CD4-positive, alpha-beta memory T cell (primary cell): ENCODE measurements at regions of chr11 and their contacts with region 1.

Region 1: DNA sequence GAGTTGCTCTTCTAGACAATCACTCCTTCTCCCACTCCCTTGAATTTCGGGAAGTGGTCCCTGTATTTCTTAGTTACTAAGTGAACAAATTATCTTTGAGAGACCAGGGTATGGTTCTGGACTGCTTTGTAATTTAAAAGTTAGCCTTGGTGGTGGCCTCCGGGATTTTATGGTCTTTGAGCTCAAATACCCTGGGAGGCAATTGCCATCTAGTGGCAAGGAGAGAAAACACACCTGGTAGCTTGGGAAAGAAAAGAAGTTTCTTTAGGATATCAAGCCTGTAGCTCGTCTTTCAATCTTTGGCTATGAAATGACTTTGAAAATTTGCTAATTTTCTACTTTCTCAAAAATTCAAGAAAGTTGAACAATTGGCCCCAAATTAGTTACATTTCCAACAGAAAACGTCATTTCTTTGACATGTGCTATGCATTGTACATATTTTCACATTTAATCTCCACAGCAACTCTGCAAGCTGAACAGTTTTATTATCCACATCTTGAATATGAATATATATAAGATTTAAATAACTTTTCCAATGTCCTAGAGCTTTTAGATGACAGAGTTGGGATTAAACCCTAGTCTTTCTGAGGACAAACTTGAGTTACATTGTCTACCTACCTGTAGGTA is 39.1 kb downstream of the MMP27 start:
- DNase-seq: peak in 4 of 5 donors; percentile 30 to 37 (median 33)
- H3K4me3 ChIP-seq: no peak overlapping the region
- H3K4me3 Mint-ChIP-seq: no peak overlapping the region
- H3K27ac ChIP-seq: no peak overlapping the region
- H3K27ac Mint-ChIP-seq: no peak overlapping the region
- H3K4me1 ChIP-seq: no peaks in the 10 kb centered on the region
- H3K4me1 Mint-ChIP-seq: no peaks in the 10 kb centered on the region
- H3K27me3 ChIP-seq: no peaks in the 10 kb centered on the region
- H3K27me3 Mint-ChIP-seq: peaks cover 1 to 12% of the 10 kb centered on the region in 2 donors

Region 2: DNA sequence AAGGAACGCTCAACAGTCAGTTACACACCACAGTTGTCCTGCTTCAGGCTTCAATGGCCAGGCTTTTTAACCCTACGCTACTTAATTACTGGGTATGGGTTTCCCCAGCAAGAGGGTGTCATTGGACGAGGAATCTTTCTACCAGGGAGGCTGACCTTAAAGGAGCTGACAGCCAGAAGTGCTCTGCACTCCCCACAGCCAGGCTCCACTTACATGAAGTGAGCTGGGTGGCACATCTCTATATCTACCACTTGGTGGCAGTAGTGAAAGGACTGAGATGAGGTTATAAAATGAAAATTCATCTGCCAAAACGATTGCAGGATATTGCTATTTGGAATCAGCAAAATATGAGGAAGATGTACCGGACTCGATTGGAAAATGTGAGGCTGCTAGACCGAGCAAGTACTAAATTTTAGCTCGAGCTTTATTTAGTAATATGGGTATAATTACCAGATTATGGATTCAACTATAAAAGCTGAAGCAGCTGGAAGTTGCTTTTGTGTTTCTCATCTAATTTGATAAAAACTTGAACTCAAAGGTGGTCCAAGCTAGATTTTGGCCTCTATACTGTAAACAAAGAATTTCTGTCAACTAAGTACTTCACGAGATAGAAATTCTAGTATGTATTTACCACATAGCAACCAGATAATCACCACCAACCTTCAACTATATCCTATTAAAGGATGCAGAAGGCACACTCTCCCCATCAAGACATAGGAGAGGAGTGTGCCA is 805.6 kb before region 1 on chr11:
- CTCF ChIA-PET with region 1: interaction called, 4 read pairs
- POLR2A ChIA-PET with region 1: no interaction called
- intact Hi-C with region 1: loop called (anchors 1 kb)
- DNase-seq: peak in 4 of 5 donors; percentile 12 to 35 (median 25)
- H3K4me3 ChIP-seq: no peak overlapping the region
- H3K4me3 Mint-ChIP-seq: no peak overlapping the region
- H3K27ac ChIP-seq: no peak overlapping the region
- H3K27ac Mint-ChIP-seq: peak overlapping the region in 1 of 7 donors; percentile 7
- H3K4me1 ChIP-seq: no peaks in the 10 kb centered on the region
- H3K4me1 Mint-ChIP-seq: peaks cover 0 to 2% (median 0%) of the 10 kb centered on the region in 4 donors
- H3K27me3 ChIP-seq: no peaks in the 10 kb centered on the region
- H3K27me3 Mint-ChIP-seq: peaks cover 7 to 9% of the 10 kb centered on the region in 2 donors

Region 3: GRCh38 chr11:102254045-102254444 is 412.4 kb before region 1 on chr11:
- CTCF ChIA-PET with region 1: interaction called, 6 read pairs
- POLR2A ChIA-PET with region 1: no interaction called
- intact Hi-C with region 1: loop called (anchors 1 kb)
- DNase-seq: peak in 1 of 5 donors; percentile 6
- H3K4me3 ChIP-seq: no peak overlapping the region
- H3K4me3 Mint-ChIP-seq: no peak overlapping the region
- H3K27ac ChIP-seq: no peak overlapping the region
- H3K27ac Mint-ChIP-seq: no peak overlapping the region
- H3K4me1 ChIP-seq: no peaks in the 10 kb centered on the region
- H3K4me1 Mint-ChIP-seq: no peaks in the 10 kb centered on the region
- H3K27me3 ChIP-seq: no peaks in the 10 kb centered on the region
- H3K27me3 Mint-ChIP-seq: no peaks in the 10 kb centered on the region

Region 4: GRCh38 chr11:102367364-102367763 is 299.1 kb before region 1 on chr11:
- CTCF ChIA-PET with region 1: interaction called, 26 read pairs
- POLR2A ChIA-PET with region 1: no interaction called
- intact Hi-C with region 1: loop called (anchors 1 kb)
- DNase-seq: peak in 4 of 5 donors; percentile 41 to 53 (median 50)
- H3K4me3 ChIP-seq: no peak overlapping the region
- H3K4me3 Mint-ChIP-seq: peak overlapping the region in 3 of 8 donors; percentile 7 to 27 (median 17)
- H3K27ac ChIP-seq: no peak overlapping the region
- H3K27ac Mint-ChIP-seq: peak overlapping the region; percentile 33 to 93 (median 72)
- H3K4me1 ChIP-seq: peaks cover 21% of the 10 kb centered on the region
- H3K4me1 Mint-ChIP-seq: peaks cover 27 to 37% (median 28%) of the 10 kb centered on the region in 4 donors
- H3K27me3 ChIP-seq: no peaks in the 10 kb centered on the region
- H3K27me3 Mint-ChIP-seq: no peaks in the 10 kb centered on the region

Region 5: GRCh38 chr11:102495161-102496042 is 171.0 kb before region 1 on chr11:
- CTCF ChIA-PET with region 1: interaction called, 12 read pairs
- POLR2A ChIA-PET with region 1: no interaction called
- intact Hi-C with region 1: loop called (anchors 1 kb)
- DNase-seq: peak; percentile 59 to 75 (median 73)
- H3K4me3 ChIP-seq: no peak overlapping the region
- H3K4me3 Mint-ChIP-seq: peak overlapping the region in 1 of 8 donors; percentile 6
- H3K27ac ChIP-seq: no peak overlapping the region
- H3K27ac Mint-ChIP-seq: no peak overlapping the region
- H3K4me1 ChIP-seq: peaks cover 4% of the 10 kb centered on the region
- H3K4me1 Mint-ChIP-seq: peaks cover 0 to 7% (median 5%) of the 10 kb centered on the region in 4 donors
- H3K27me3 ChIP-seq: peaks cover 4% of the 10 kb centered on the region
- H3K27me3 Mint-ChIP-seq: peaks cover 5 to 7% of the 10 kb centered on the region in 2 donors

Region 6: DNA sequence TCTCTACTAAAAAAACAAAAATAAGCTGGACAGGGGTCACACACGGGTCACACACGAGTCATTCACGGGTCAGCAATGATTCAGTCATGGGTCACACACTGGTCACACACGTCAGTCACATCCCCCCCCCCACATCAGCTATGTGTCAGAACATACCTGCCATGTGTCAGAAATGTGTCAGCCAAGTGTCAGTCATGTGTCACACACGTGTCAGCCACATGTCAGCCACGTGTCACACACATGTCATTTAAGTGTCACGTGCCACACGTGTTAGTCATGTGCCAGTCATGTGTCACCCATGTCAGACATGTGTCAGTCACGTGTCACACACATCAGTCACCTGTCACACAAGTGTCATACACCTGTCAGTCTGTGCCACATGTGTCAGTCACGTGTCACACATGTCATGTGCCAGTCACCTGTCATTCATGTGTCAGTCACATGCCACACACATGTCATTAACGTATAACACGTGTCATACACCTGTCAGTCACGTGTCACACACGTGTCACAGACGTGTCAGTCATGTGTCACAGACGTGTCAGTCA is 12.6 kb before region 1 on chr11:
- CTCF ChIA-PET with region 1: interaction called, 17 read pairs
- POLR2A ChIA-PET with region 1: no interaction called
- intact Hi-C with region 1: no loop called
- DNase-seq: no peak
- H3K4me3 ChIP-seq: no peak overlapping the region
- H3K4me3 Mint-ChIP-seq: no peak overlapping the region
- H3K27ac ChIP-seq: no peak overlapping the region
- H3K27ac Mint-ChIP-seq: no peak overlapping the region
- H3K4me1 ChIP-seq: no peaks in the 10 kb centered on the region
- H3K4me1 Mint-ChIP-seq: no peaks in the 10 kb centered on the region
- H3K27me3 ChIP-seq: no peaks in the 10 kb centered on the region
- H3K27me3 Mint-ChIP-seq: peaks cover 8 to 11% of the 10 kb centered on the region in 2 donors